ENCODE measurements at regions of chr17 and their contacts with region 1.

Region 1: DNA sequence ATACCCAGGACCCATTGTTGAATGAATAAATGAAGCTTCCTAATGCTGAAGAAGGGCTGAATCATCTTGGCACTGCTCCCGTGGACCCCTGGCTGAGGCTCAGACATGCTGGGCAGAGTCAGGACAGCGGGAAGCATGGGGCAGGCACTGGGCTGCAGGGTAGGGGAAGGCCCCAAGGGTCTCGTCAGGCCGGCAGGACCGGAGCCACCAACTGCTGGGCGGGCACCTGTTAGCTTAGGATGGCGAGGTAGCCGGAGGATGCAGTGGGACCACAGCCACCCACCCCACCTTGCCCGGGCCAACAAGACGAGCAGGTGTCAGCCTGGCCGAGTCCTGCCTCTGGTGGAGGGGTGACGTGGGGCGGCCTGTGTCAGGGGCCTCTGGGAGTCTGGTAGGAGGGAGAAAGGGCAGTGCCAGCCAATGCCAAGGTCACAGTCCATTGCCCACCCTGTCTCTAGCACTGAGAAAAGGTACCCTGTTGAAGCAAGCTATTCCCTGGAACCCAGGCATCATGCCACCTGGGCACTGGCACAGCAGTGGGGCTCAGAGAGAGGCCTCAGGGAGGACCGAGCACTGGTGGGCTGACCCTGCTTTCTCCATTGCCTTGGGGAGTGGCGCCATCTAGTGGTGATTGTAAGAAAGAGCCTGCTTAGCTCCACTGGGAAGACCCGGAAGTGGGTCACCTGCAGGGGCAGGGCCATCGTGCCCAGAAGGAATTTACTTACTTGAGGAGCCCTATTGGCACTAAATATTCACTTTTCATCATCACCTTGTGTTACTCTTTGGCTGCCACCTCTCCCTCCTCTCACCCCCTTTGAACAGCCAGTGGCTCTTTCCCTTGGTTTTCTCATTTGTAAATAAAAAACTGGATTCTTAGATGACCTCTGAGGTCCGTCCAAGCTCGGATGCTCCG is 3.0 kb upstream of the DLX3 start:
- DNase-seq: peak; percentile 97
- ATAC-seq: peak; percentile 71
- H3K4me3 ChIP-seq: peak overlapping the region; percentile 26; the same call in 1 of the 2 replicates
- H3K27ac ChIP-seq: no peak overlapping the region
- H3K4me1 ChIP-seq: peaks cover 32% of the 10 kb centered on the region
- H3K27me3 ChIP-seq: peaks cover 34% of the 10 kb centered on the region
- CTCF ChIP-seq: peak; percentile 99

Region 2: DNA sequence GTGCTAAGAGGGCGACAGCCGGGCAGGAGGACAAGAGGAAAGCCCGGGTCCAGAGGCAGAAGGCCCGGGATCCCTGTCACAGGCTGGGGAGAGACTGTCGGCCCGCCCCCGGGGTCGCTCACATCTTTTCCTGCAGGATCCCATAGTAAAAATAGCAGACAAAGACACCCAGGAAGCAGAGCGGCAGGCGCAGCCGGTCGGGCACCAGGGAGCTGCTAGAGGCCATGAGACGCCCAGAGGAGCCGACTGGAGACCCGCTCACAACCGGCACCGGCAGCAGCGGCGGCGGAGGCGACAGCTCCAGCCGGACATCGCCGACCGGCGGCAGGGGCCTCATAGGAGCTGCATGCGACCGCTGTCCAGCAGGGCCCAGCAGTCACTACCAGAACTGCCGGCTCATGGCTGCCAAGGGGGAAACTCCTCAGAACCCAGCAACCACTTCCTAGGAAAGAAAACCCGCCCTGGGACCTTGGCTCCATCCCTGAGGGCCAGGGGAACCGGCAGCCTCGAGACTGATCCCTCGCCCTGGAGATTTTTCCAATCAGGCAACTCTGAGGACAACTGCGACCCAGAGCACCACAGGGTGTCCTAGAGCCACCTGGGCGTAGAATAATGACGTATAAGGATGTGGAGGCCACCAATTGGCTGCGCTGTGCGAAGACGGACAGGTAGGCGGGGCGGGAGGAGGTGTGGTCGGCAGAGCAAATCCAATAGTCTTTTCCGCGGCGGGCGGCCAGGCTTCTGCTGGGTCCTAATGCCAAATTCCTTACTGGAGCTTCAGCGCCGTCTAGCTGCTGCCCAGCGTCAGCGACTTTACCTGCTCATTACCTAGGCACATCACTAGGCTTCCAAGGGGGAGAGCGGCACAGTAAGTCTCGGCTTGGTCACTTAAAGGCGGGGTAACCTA is 290.2 kb before region 1 on chr17 and contains the start of gene SLC35B1:
- CTCF ChIA-PET with region 1: interaction called, 9 read pairs
- POLR2A ChIA-PET with region 1: no interaction called
- intact Hi-C with region 1: loop called (anchors 5 kb)
- DNase-seq: peak; percentile 100
- ATAC-seq: peak; percentile 91
- H3K4me3 ChIP-seq: peak within 1 kb of the TSS; percentile 86
- H3K27ac ChIP-seq: peak within 1 kb of the TSS; percentile 80
- H3K4me1 ChIP-seq: peaks cover 17% of the 10 kb centered on the region
- H3K27me3 ChIP-seq: no peaks in the 10 kb centered on the region
- CTCF ChIP-seq: peak; percentile 98
- total RNA-seq, gene SLC35B1: 199 and 211 TPM in 2 replicates

Region 3: GRCh38 chr17:49880291-49881053 is 117.6 kb before region 1 on chr17:
- CTCF ChIA-PET with region 1: interaction called, 5 read pairs
- POLR2A ChIA-PET with region 1: interaction called, 3 read pairs
- intact Hi-C with region 1: loop called (anchors 1 kb)
- DNase-seq: peak; percentile 91
- ATAC-seq: peak; percentile 99
- H3K4me3 ChIP-seq: peak overlapping the region; percentile 43; the same call in 1 of the 2 replicates
- H3K27ac ChIP-seq: no peak overlapping the region
- H3K4me1 ChIP-seq: no peaks in the 10 kb centered on the region
- H3K27me3 ChIP-seq: no peaks in the 10 kb centered on the region
- CTCF ChIP-seq: peak; percentile 98

Region 4: DNA sequence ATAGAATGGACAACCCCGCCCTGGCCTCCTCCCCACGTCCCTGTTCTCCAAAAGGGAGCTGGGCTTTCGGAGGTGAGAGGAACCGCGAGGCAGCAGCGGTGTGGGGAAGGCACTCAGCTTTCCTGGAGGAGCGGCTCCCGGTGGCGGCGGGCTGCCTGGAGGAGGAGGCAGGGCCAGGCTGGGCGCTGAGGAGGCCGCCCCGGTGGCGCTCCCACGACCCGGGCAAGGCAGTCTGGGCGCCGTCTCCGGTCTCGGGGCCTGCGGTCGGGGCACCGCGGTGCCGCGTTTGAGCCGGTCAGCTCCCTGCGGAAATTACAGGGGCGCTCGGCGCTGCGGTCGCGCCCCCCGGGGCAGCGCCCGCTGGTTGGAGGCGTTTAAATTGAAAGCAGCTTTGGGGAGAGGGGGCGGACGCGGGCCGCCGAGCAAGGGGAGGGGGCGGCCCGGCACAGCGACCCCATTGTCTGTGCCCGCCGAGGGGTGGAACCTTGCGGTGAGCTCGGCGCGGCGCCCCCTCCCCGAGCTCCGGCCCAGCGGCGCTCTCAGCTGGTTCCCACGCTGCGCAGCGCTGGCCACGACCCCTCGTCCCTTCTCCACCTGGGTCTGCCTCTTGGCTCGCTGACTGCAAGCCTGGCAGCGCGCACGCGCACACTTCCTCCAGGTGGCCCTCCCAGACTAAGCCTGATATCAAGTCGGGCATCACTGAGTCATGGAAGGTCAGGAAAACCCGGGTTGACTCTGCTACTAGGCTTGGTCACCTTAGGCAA is 87.8 kb before region 1 on chr17:
- CTCF ChIA-PET with region 1: no interaction called
- POLR2A ChIA-PET with region 1: no interaction called
- intact Hi-C with region 1: no loop called
- DNase-seq: peak; percentile 79
- ATAC-seq: peak; percentile 52
- H3K4me3 ChIP-seq: no peak overlapping the region
- H3K27ac ChIP-seq: no peak overlapping the region
- H3K4me1 ChIP-seq: peaks cover 30% of the 10 kb centered on the region
- H3K27me3 ChIP-seq: no peaks in the 10 kb centered on the region
- CTCF ChIP-seq: no peak

Region 5: DNA sequence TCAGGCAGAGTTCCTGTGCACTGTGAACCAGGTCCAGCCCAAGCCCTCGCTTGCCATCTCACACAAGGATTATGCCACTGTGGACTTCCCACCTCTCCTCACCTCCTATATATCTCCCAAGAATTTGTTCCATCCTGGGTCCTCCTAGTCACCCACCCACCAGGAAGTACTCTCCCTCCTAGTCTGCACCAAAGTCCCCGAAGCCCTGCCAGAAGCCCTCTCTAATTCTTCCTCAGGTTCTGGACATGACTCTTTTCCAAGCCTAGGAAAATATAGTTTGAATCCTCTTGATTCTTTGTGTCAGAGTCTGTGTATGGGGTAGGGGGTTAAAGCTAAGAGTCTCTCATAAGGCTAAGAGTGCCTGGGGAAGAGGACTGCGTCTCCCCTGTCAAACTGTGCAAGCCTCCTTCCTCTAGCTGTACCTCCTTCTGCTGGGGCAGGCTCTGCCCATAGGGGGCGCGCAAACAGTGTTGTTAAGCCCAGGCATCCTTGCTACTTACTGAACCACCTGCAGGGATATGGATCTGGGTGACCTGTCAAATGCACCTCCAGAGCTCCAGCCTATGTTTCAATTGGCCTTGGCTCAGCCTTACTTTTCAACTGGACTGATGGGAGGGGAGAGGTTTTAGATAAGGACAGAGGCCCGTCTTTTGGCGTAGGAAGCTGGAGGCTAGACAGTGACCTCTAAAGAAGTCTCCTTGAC is 45.7 kb before region 1 on chr17:
- CTCF ChIA-PET with region 1: interaction called, 35 read pairs
- POLR2A ChIA-PET with region 1: no interaction called
- intact Hi-C with region 1: loop called (anchors 1 kb)
- DNase-seq: peak; percentile 90
- ATAC-seq: peak; percentile 88
- H3K4me3 ChIP-seq: peak overlapping the region; percentile 3; the same call in 1 of the 2 replicates
- H3K27ac ChIP-seq: peak overlapping the region; percentile 8; the same call in 1 of the 2 replicates
- H3K4me1 ChIP-seq: peaks cover 28% of the 10 kb centered on the region
- H3K27me3 ChIP-seq: no peaks in the 10 kb centered on the region
- CTCF ChIP-seq: peak; percentile 100

Region 6: DNA sequence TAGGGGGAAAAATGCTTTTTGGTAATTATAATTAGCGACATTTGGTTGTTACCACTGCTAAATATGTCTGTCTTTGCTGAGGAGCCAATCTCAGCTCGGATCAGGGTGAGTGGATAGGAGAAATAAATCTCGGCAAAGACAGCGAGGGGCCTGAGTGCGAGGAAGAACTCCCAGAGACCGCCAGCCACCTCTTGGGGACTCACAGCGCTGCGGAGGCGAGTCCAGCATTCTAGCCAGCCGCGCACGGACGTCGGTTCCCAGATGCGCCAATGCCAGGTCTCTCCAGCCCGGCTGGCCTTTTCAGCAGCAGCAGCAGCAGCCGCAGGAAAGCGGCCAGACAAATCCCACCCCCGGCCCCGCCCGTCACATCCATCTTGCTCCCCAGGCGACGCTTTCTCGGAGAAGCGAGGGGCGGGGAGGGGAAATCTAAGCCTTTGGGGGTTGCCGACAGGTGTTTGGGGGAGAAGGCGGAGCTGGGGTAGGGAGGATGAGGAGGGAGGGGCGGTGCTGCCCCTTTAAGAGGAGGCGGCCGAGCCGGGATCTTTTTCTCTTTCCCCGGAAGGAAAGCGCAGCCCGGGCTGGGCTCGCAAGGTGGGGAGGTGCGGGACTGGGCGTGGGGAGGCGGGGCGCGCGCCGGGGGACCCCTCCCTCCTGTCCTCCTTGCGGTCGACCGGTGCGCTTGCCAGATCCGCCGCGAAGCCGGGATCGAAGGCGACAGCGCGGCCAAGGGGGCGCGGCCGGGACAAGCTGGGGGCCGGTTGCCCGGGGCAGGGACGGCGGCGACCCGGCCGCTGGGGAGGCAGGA is 57.6 kb after region 1 on chr17 and contains the start of gene ITGA3:
- CTCF ChIA-PET with region 1: interaction called, 3 read pairs
- POLR2A ChIA-PET with region 1: interaction called, 14 read pairs
- intact Hi-C with region 1: no loop called
- DNase-seq: peak; percentile 98
- ATAC-seq: peak; percentile 36
- H3K4me3 ChIP-seq: peak within 1 kb of the TSS; percentile 90
- H3K27ac ChIP-seq: peak within 1 kb of the TSS; percentile 96
- H3K4me1 ChIP-seq: peaks cover 79% of the 10 kb centered on the region
- H3K27me3 ChIP-seq: no peaks in the 10 kb centered on the region
- CTCF ChIP-seq: no peak
- total RNA-seq, gene ITGA3: 598 and 763 TPM in 2 replicates

Measured in PC-3 (cell line).